Activated CD4-positive, alpha-beta T cell treated with anti-CD3 and anti-CD28 coated beads for 36 hours (primary cell): ENCODE measurements at regions of chr2 and their contacts with region 1.

Region 1: DNA sequence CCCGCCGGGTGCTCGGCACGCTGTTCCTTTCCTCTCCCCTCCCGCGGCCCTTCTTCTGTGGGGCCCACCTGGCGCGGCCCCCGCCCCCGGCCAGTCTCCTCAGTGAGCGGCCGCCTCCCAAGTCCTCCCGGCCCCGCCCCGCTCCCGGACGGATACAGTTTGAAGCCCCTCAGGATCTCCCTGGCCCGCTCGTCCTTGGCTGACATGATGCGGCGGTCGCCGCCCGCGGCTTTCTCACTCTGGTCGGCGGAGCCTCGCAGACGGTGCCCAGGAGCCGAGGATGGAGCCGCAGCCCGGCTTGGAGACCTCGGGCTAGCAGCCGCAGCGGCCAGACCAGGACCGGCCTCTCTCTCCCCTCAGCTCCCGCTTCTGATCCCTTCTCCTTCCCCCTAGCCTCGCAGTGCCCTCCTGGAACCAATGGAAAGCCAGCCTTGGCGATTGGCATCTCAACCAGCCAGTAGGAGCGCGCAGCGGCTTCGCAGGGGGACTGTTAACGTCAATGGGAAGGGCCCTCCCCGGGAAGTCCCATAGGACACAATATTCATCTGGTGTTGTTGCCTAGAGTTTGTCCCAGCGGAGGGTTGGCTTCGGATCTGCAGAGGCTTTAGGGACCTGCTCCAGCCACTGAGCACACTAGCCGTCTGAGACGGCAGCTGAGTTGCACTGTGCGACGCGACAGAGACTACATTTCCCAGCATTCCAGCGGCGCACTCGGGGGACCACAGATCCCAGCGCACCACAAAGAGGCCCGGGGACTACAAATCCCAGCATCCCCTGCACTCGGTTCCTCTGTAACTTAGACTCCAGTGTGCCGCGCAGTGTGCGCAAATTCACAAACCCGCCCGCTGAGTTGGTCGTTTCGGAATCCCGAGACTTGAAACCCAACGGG is at the start of gene PDE6D:
- DNase-seq: peak; percentile 97
- ATAC-seq: peak; percentile 93
- H3K4me3 Mint-ChIP-seq: peak within 1 kb of the TSS; percentile 83
- H3K27ac Mint-ChIP-seq: peak within 1 kb of the TSS; percentile 92
- H3K4me1 Mint-ChIP-seq: peaks cover 44% of the 10 kb centered on the region
- H3K27me3 Mint-ChIP-seq: no peaks in the 10 kb centered on the region
- total RNA-seq, gene PDE6D: 28.0 to 31.1 TPM

Region 2: DNA sequence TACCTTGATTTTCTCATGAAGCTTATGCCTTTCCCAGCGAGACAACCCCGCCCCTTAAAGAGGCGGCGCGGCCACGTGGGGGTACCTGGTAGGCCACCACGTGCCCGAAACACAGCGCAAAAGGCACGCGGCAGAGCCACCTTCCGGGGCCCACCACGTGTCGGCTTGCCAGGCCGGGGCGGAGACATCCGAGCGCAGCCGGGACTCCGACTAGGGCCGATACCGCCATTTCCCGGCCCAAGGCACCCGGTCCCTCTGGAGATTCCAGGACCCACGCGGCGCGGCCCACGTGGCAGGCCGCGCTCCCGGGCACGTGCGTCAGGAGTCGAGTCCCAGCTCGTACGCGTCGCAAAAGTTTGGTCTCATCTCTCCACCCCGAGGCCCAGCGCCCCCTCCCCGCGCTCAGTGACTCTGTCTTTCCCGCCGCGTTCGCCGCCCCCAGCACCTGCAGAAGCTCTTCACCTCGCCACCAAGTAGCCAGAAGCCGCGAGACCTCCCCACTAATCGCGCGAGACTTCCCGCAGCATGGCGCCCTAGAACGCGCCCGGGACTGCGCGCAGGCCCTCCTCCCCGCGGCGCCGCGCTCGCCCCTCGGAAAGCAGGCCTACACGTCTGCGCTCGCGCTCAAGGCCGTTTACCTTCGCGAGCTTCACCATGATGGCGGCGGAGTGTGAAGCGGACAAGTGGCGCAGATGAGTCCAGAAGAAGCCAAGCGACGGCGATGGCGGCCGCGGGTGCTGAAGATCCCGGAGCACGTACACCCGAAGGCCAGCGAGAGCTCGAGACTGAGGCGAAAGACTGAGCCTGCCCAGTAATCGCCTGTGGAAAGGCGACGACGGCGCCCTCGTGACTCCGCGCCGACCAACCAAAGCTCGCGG is 317.2 kb before region 1 on chr2 and contains the start of gene NCL:
- CTCF ChIA-PET with region 1: no interaction called
- POLR2A ChIA-PET with region 1: no interaction called
- intact Hi-C with region 1: loop called in 1 of 2 experiments (anchors 1 kb)
- DNase-seq: peak; percentile 92
- ATAC-seq: peak; percentile 93
- H3K4me3 Mint-ChIP-seq: peak within 1 kb of the TSS; percentile 98
- H3K27ac Mint-ChIP-seq: peak within 1 kb of the TSS; percentile 99
- H3K4me1 Mint-ChIP-seq: peaks cover 42% of the 10 kb centered on the region
- H3K27me3 Mint-ChIP-seq: no peaks in the 10 kb centered on the region
- total RNA-seq, gene NCL: 1,311 to 1,332 TPM

Region 3: GRCh38 chr2:231662028-231662810 is 118.9 kb before region 1 on chr2:
- CTCF ChIA-PET with region 1: no interaction called
- POLR2A ChIA-PET with region 1: no interaction called
- intact Hi-C with region 1: loop called (anchors 1 to 5 kb)
- DNase-seq: peak; percentile 98
- ATAC-seq: peak; percentile 92
- H3K4me3 Mint-ChIP-seq: peak overlapping the region; percentile 72
- H3K27ac Mint-ChIP-seq: peak overlapping the region; percentile 96
- H3K4me1 Mint-ChIP-seq: peaks cover 23% of the 10 kb centered on the region
- H3K27me3 Mint-ChIP-seq: no peaks in the 10 kb centered on the region

Region 4: DNA sequence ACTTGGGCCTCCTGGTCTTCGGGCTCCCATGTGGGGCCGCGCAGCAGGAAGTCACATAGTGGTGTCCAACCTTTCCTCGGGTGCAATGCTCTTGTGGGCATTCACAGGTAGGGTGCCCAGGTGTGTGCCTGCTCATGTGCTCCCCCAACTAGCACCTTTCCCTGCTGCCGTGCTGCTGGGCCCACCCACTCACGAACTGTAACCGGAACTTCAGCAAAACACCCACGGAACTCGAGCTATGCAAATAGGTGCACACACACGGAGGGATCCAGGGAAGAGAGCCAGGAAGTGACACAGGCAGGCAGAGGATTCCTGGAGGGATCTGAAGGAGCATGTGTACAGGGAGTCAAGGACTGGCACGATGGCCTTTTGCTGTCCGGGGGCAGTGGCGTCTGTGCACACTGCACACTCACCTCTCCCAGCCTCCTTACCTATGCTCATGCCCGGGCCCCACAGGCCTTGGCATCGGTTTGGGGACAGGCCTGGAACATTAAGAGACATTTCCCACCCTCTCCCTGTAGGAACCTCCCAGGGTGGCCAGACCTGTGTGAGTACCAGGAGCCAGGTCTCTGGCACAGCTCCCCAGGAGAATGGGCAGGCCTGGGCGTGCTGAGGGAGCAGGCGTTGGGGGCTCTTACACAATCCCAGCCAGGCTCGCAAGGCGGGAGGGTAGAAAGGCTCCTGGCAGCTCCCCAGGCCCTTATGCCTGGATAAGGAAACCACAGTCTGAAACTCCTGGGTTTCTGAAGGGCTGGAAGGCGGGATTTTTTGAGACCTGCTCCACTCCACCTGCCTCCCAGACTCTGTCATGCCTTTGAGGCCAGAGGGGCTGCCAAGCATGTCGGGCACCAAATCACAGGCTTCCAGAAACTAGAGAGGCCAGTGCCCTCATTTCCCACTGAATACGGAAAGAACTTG is 79.4 kb before region 1 on chr2:
- CTCF ChIA-PET with region 1: no interaction called
- POLR2A ChIA-PET with region 1: interaction called, 10 read pairs
- intact Hi-C with region 1: loop called in 1 of 2 experiments (anchors 2 kb)
- DNase-seq: no peak
- ATAC-seq: no peak
- H3K4me3 Mint-ChIP-seq: no peak overlapping the region
- H3K27ac Mint-ChIP-seq: no peak overlapping the region
- H3K4me1 Mint-ChIP-seq: peaks cover 10% of the 10 kb centered on the region
- H3K27me3 Mint-ChIP-seq: no peaks in the 10 kb centered on the region

Region 5: DNA sequence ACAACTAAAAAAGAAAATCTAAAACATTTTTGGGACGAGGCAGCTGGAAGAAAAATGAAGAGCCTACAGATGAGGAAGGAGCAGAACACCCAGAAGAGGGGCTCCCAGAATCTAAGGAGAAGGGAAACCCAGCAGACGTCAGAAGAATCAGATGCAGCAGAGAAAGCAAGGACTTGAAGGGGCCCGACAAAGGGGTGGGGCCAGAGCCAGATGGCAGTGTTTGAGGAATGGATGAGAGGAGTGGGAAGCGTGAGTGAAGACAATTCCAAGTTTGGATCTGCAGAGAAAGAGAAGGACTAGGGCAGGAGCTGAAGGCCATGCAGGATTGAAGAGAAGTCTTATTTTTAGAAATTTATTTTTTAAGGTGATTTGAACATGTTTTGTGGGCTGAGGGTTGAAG is 53.5 kb before region 1 on chr2:
- CTCF ChIA-PET with region 1: no interaction called
- POLR2A ChIA-PET with region 1: no interaction called
- intact Hi-C with region 1: no loop called
- DNase-seq: no peak
- ATAC-seq: no peak
- H3K4me3 Mint-ChIP-seq: no peak overlapping the region
- H3K27ac Mint-ChIP-seq: no peak overlapping the region
- H3K4me1 Mint-ChIP-seq: no peaks in the 10 kb centered on the region
- H3K27me3 Mint-ChIP-seq: no peaks in the 10 kb centered on the region

Region 6: GRCh38 chr2:231961349-231962166 is 180.4 kb after region 1 on chr2 and contains the start of gene DIS3L2:
- CTCF ChIA-PET with region 1: no interaction called
- POLR2A ChIA-PET with region 1: no interaction called
- intact Hi-C with region 1: loop called in 1 of 2 experiments (anchors 1 kb)
- DNase-seq: peak; percentile 91
- ATAC-seq: peak; percentile 94
- H3K4me3 Mint-ChIP-seq: peak within 1 kb of the TSS; percentile 90
- H3K27ac Mint-ChIP-seq: peak within 1 kb of the TSS; percentile 96
- H3K4me1 Mint-ChIP-seq: peaks cover 41% of the 10 kb centered on the region
- H3K27me3 Mint-ChIP-seq: peaks cover under 1% of the 10 kb centered on the region
- total RNA-seq, gene DIS3L2: 25.6 to 34.5 TPM

Region 7: GRCh38 chr2:232550354-232551249 is 769.4 kb after region 1 on chr2 and contains the starts of genes EIF4E2 and TIGD1:
- CTCF ChIA-PET with region 1: no interaction called
- POLR2A ChIA-PET with region 1: no interaction called
- intact Hi-C with region 1: loop called in 1 of 2 experiments (anchors 1 kb)
- DNase-seq: peak; percentile 96
- ATAC-seq: peak; percentile 95
- H3K4me3 Mint-ChIP-seq: peak within 1 kb of the TSS; percentile 98
- H3K27ac Mint-ChIP-seq: peak within 1 kb of the TSS; percentile 100
- H3K4me1 Mint-ChIP-seq: peaks cover 66% of the 10 kb centered on the region
- H3K27me3 Mint-ChIP-seq: no peaks in the 10 kb centered on the region
- total RNA-seq, gene EIF4E2: 57.0 to 68.0 TPM
- total RNA-seq, gene TIGD1: 7.6 to 7.9 TPM

Region 8: GRCh38 chr2:233084488-233084887 is 1303.3 kb after region 1 on chr2:
- CTCF ChIA-PET with region 1: no interaction called
- POLR2A ChIA-PET with region 1: no interaction called
- intact Hi-C with region 1: loop called in 1 of 2 experiments (anchors 10 kb)
- DNase-seq: peak; percentile 72
- ATAC-seq: peak; percentile 5
- H3K4me3 Mint-ChIP-seq: peak overlapping the region; percentile 50
- H3K27ac Mint-ChIP-seq: peak overlapping the region; percentile 87
- H3K4me1 Mint-ChIP-seq: peaks cover 79% of the 10 kb centered on the region
- H3K27me3 Mint-ChIP-seq: no peaks in the 10 kb centered on the region